ENCODE measurements at regions of chr14 and their contacts with region 1.

Region 1: DNA sequence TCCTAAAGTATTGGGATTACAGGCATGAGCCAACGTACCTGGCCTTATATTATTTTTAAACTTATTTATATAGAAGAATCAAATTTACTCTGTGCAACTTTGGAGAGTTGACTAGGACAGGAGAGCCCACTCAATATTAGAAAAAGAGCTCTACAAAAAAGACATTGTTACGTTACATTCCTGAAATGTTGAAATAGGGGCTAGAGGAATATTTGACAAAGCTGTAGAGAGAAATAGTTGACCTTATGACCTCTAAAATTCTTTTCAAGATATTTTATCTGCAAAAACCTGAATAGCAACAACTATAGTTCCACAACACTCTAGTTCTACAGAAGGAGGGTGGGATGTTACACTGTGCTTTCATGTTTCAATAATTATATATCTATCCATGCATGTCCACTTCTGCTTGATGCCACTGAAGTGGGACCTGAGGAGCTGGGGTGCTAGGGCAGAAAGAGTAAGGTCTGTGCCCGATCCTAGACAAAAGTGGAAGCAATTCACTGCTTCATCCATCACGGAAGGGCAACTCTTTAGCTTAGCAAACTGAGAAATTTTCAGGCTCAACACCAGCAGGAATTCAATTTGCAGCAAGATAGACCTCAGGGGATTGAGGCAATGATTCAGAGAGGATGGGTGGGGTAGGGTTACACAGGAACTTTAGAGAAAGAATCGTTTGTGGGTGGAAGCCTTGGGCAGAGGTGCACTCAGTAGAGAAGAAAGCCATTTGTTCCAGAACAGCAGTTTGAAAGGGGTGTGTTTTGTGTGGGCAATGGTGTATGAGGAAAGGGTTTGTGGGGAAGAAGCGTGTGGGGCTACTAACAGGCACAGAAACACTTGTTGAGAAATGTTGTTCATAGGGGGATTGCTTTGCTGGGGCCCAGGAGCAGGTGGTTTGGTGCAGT is 16.0 kb upstream of the RNASE10 start:
- DNase-seq: peak; percentile 59
- ATAC-seq: peak; percentile 83
- H3K4me3 ChIP-seq: peak overlapping the region in 4 of 5 experiments; percentile 15 to 30 (median 24)
- H3K4me3 Mint-ChIP-seq: peak overlapping the region; percentile 85
- H3K27ac ChIP-seq: peak overlapping the region; percentile 44 to 72
- H3K27ac Mint-ChIP-seq: peak overlapping the region; percentile 95
- H3K4me1 ChIP-seq: peaks cover 67 to 76% of the 10 kb centered on the region in 2 donors
- H3K4me1 Mint-ChIP-seq: peaks cover 65% of the 10 kb centered on the region
- H3K27me3 ChIP-seq: no peaks in the 10 kb centered on the region
- H3K27me3 Mint-ChIP-seq: no peaks in the 10 kb centered on the region
- CTCF ChIP-seq: no peak

Region 2: DNA sequence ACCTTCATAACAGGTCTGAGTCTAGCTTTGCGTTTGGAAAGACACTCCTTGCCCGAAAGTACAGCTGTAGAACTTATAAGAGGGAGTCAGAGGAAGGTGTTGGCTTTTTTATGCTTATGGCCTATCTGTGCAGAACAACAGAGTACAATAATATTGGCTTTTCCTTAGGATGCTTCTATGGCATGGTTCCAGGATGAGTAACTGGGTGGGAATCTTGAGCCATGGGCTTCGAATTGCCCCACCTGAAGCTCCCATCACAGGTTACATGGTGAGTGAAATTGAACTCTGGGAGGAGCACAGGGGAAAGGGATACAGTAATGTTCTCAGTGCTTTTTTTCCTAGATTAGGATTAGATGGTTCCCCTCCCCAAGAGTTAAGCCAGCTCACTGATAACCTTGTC is 132.9 kb before region 1 on chr14:
- CTCF ChIA-PET with region 1: no interaction called
- POLR2A ChIA-PET with region 1: no interaction called
- intact Hi-C with region 1: no loop called
- DNase-seq: no peak
- ATAC-seq: no peak
- H3K4me3 ChIP-seq: no peak overlapping the region
- H3K4me3 Mint-ChIP-seq: no peak overlapping the region
- H3K27ac ChIP-seq: no peak overlapping the region
- H3K27ac Mint-ChIP-seq: no peak overlapping the region
- H3K4me1 ChIP-seq: no peaks in the 10 kb centered on the region
- H3K4me1 Mint-ChIP-seq: peaks cover 6% of the 10 kb centered on the region
- H3K27me3 ChIP-seq: no peaks in the 10 kb centered on the region
- H3K27me3 Mint-ChIP-seq: no peaks in the 10 kb centered on the region
- CTCF ChIP-seq: no peak

Region 3: GRCh38 chr14:20469242-20469889 is 20.0 kb before region 1 on chr14 and contains the start of gene PNP:
- CTCF ChIA-PET with region 1: interaction called, 5 read pairs
- POLR2A ChIA-PET with region 1: interaction called, 11 read pairs
- intact Hi-C with region 1: no loop called
- DNase-seq: peak; percentile 92
- ATAC-seq: peak; percentile 93
- H3K4me3 ChIP-seq: peak within 1 kb of the TSS; percentile 88 to 99 (median 98)
- H3K4me3 Mint-ChIP-seq: peak within 1 kb of the TSS; percentile 100
- H3K27ac ChIP-seq: peak within 1 kb of the TSS; percentile 73 to 81
- H3K27ac Mint-ChIP-seq: peak within 1 kb of the TSS; percentile 96
- H3K4me1 ChIP-seq: peaks cover 31 to 33% of the 10 kb centered on the region in 2 donors
- H3K4me1 Mint-ChIP-seq: peaks cover 52% of the 10 kb centered on the region
- H3K27me3 ChIP-seq: no peaks in the 10 kb centered on the region
- H3K27me3 Mint-ChIP-seq: no peaks in the 10 kb centered on the region
- CTCF ChIP-seq: no peak
- total RNA-seq, gene PNP: 38.9 and 42.0 TPM in 2 replicates

Region 4: DNA sequence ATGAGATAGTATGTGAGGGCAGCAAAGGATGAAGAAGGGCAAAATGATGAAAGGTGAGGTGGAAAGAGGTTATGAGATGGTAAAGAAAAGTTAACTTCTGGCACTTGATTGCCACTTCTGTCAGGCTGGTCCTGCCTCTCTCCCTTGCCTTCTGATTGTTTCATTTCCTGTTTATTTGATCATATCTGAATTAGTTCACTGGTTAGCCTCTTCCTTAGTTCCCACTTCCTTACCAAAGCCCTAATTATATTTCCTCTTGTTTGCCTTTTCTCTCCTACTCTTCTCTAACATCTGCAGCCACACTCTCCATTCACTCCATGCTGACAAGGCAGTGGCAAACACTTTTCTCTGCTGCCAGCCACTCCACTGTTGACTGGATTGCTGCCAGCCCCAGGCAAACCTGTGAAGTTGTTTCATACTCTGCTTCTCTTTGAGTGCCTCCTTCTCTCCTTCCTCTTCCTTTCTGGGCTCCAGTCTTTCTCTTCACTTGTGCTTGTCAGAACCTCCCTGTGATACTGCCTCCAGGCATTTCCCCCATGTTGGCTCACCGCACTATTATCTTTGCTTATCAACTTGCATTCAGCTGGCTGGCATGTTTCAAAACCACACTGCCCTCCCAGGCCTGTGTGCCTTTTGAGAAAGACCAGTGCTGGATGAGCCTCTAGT is 12.0 kb before region 1 on chr14:
- CTCF ChIA-PET with region 1: no interaction called
- POLR2A ChIA-PET with region 1: interaction called, 3 read pairs
- intact Hi-C with region 1: loop called (anchors 1 kb)
- DNase-seq: peak; percentile 64
- ATAC-seq: peak; percentile 85
- H3K4me3 ChIP-seq: peak overlapping the region in 1 of 5 experiments; percentile 30
- H3K4me3 Mint-ChIP-seq: peak overlapping the region; percentile 58
- H3K27ac ChIP-seq: peak overlapping the region; percentile 71 to 77
- H3K27ac Mint-ChIP-seq: peak overlapping the region; percentile 93
- H3K4me1 ChIP-seq: peaks cover 28% of the 10 kb centered on the region in 2 donors
- H3K4me1 Mint-ChIP-seq: peaks cover 43% of the 10 kb centered on the region
- H3K27me3 ChIP-seq: no peaks in the 10 kb centered on the region
- H3K27me3 Mint-ChIP-seq: no peaks in the 10 kb centered on the region
- CTCF ChIP-seq: no peak

Region 5: GRCh38 chr14:20530771-20531571 is 41.6 kb after region 1 on chr14:
- CTCF ChIA-PET with region 1: interaction called, 12 read pairs
- POLR2A ChIA-PET with region 1: no interaction called
- intact Hi-C with region 1: loop called (anchors 5 kb)
- DNase-seq: peak; percentile 78
- ATAC-seq: peak; percentile 65
- H3K4me3 ChIP-seq: no peak overlapping the region
- H3K4me3 Mint-ChIP-seq: no peak overlapping the region
- H3K27ac ChIP-seq: no peak overlapping the region
- H3K27ac Mint-ChIP-seq: peak overlapping the region; percentile 42
- H3K4me1 ChIP-seq: peaks cover 0 to 4% of the 10 kb centered on the region in 2 donors
- H3K4me1 Mint-ChIP-seq: peaks cover 9% of the 10 kb centered on the region
- H3K27me3 ChIP-seq: no peaks in the 10 kb centered on the region
- H3K27me3 Mint-ChIP-seq: peaks cover 9% of the 10 kb centered on the region
- CTCF ChIP-seq: peak; percentile 83